Left cardiac atrium (tissue), 4 donors: ENCODE measurements at regions of chr5 and their contacts with region 1.

Region 1: DNA sequence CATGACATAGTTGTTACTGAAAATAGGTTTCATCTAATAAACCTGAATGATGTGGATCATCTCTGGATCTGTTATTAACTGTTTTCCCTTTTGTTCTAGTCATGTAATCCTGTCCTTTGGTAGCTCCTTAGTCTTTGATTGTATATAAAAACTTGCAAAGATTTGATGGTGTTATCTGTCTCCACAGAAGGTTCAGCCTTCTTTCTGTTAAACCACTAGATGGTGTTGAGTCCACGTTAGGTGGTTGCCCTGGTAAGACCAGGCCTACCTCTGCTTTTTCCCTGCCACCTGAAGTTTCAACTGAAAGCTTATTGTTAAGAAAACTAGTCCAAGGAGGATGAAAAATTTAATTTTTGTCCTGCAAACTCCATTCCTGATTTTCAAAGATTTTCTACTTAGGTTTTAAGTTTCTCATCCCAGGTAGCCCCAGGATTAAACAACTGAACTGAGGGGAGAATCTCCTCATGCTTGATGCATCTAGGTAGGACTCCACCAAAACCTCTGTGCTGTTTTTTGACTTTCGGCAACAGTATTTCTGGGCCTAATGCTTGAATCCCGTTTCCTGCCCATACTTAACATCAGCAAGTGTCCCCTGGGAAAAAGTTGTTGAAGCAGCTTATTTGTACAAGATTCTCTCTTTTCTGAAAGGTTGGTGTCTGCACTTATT is 68.5 kb downstream of the RICTOR start:
- DNase-seq: no peak
- ATAC-seq: peak in 1 of 2 donors; percentile 77

Region 2: DNA sequence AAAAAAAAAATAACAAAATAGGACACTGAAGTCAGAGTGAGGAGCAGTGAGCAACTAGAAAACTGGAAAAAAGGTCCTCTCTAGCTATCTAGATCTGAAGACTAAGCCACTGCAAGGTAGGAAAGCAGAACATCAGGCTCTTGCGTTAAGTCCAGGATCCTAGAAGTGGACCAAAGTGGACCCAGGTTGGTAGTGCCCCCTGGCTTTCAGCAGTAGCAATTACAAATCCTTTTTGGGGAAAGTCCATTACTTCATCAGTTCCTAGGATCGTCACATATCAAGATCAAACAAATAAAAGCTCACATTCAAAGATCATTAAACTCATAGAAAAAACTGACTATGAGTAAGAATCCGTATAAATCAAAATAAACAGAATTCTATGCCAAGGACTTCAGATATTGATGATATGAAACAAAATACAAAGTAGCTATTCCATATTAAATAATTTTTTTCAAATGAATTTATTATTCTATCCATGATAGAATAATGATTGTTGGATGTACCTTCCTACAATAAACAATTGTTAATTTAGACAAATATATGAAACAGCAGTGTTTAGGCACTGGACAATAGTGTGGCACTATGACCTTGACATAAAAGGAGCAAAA is 75.0 kb after region 1 on chr5:
- intact Hi-C with region 1: loop called (anchors 2 to 5 kb)
- DNase-seq: peak; percentile 40
- ATAC-seq: peak; percentile 67 to 89

Region 3: DNA sequence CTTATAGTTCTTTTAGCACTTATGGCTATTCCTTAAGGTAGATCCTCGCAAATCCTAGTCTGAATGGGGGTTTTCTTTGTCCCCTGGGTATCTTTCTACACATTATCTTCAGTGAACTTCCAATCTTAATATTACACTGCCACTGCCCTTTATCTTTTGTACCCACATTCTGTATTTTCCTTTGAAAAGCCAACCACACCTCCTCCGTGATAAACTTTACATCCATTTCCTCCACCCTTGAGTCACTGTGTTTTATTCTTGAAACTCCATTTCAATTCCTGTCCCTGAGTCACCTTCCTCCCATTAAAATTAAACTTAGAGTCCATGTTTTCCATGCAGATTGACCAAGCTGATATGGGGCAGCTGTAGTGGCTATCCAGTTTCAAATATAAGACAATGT is 111.7 kb after region 1 on chr5:
- intact Hi-C with region 1: no loop called
- DNase-seq: no peak
- ATAC-seq: no peak

Region 4: DNA sequence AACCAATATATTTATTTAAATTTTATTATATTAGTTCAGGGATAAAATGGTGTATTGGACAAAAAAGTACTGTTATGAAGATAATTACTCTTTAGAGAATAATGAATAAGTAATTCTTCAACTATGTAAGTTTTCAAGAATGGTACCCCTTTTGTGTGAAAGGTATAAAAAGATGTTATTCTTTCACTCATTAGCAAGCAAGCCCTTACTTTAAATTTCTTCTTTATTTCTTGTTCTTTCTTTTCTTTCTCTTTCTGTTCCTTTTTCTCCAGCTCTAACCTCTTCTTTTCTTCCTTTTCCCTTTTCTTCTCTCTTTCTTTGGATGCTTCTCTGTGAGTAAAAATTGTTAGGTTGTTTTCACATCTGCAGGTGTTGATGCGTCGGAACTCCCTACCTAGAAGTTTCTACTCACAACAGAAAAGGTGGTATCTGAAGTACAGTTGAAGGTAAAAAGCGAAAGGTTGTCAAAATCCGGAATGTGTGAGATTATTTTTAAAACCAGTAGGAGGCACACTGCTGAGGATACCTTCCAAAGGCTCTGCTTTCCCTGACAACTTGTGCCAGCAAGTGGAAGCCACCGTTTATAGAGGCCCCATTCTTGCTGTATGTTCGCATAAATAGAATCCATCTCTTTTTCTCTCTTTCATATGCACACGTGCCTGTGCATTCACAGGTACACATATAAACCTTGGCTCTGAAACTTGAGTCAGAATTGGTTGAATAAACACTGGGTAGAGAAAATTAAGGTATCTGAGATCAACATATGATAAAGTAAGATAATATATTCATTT is 131.9 kb after region 1 on chr5:
- intact Hi-C with region 1: no loop called
- DNase-seq: no peak
- ATAC-seq: no peak

Region 5: DNA sequence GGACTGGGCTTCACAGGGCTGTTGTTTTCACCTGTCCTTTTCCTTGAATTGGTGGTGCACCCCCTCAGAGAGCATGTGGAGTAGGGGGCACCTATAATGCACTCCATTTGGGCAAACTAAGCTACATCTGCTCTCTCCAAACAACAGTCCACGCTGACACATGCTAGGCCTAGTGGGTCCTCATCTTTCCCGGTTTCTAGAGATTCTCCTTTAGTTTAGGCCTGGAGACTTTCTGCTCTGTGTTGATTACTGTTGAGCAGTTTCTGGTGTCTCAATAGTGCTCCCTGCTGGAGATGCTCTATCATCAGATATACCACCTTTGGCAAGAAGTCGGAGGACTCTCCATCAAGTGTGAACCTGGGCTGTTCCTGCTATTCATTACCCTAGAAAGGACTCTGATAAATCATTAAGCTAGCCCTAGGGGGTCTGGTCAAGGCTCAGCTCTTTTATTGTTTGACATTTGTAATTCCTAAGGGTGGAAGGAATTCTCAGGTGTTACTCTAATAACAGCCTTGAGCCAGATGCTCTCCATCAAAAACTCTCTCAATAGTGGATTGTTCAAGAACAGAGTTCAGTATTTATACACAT is 277.6 kb after region 1 on chr5:
- intact Hi-C with region 1: loop called in 1 of 2 experiments (anchors 10 kb)
- DNase-seq: no peak
- ATAC-seq: peak; percentile 70 to 76